Activated CD4-positive, alpha-beta memory T cell treated with anti-CD3 and anti-CD28 coated beads for 36 hours (primary cell): ENCODE measurements at regions of chr2 and their contacts with region 1.

Region 1: GRCh38 chr2:27303093-27304025 is 4.9 kb downstream of the UCN start:
- DNase-seq: peak; percentile 48
- H3K4me3 Mint-ChIP-seq: peak overlapping the region; percentile 55
- H3K27ac Mint-ChIP-seq: no peak overlapping the region
- H3K4me1 Mint-ChIP-seq: peaks cover 8% of the 10 kb centered on the region
- H3K27me3 Mint-ChIP-seq: peaks cover 27% of the 10 kb centered on the region

Region 2: GRCh38 chr2:26846328-26847306 is 456.7 kb before region 1 on chr2:
- CTCF ChIA-PET with region 1: interaction called, 15 read pairs
- POLR2A ChIA-PET with region 1: no interaction called
- intact Hi-C with region 1: no loop called
- DNase-seq: peak; percentile 71
- H3K4me3 Mint-ChIP-seq: no peak overlapping the region
- H3K27ac Mint-ChIP-seq: no peak overlapping the region
- H3K4me1 Mint-ChIP-seq: peaks cover 11% of the 10 kb centered on the region
- H3K27me3 Mint-ChIP-seq: peaks cover 43% of the 10 kb centered on the region

Region 3: DNA sequence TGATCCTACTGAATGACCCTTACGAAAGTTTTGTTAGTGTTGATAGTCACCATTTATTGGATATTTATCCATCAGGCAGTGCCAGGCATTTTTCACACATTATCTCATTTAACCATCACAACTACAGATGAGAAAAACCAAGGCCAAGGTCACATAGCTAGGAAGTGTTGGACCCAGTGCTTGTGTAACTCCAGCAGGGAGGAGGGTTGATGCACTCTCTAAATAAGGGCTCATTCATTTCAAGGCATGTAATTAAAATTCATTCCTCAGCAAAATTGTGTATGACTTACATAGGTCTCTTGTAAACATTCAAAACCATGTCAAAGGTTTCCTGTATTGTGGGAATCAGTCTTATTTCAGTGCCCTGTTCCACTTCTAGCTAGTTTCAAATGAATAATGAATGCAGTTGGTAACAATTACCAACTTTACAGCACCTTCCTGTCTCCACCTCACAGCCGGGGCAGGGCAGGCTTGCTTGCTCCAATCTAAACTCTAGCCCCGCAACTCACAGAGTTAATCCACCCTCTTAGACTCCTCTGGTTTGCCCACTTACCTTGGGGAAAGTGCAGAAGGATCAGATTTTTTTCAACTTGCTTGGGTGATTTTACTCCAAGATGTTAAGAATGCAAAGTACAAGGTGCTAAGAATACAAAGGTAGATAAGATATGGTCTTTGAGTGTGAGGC is 338.8 kb before region 1 on chr2:
- CTCF ChIA-PET with region 1: interaction called, 46 read pairs
- POLR2A ChIA-PET with region 1: no interaction called
- intact Hi-C with region 1: loop called (anchors 1 kb)
- DNase-seq: no peak
- H3K4me3 Mint-ChIP-seq: no peak overlapping the region
- H3K27ac Mint-ChIP-seq: no peak overlapping the region
- H3K4me1 Mint-ChIP-seq: peaks cover 7% of the 10 kb centered on the region
- H3K27me3 Mint-ChIP-seq: peaks cover 22% of the 10 kb centered on the region

Region 4: GRCh38 chr2:27050281-27050995 is 252.9 kb before region 1 on chr2:
- CTCF ChIA-PET with region 1: no interaction called
- POLR2A ChIA-PET with region 1: no interaction called
- intact Hi-C with region 1: no loop called
- DNase-seq: peak; percentile 97
- H3K4me3 Mint-ChIP-seq: peak overlapping the region; percentile 98
- H3K27ac Mint-ChIP-seq: peak overlapping the region; percentile 100
- H3K4me1 Mint-ChIP-seq: peaks cover 18% of the 10 kb centered on the region
- H3K27me3 Mint-ChIP-seq: peaks cover 8% of the 10 kb centered on the region

Region 5: GRCh38 chr2:27133905-27134780 is 169.2 kb before region 1 on chr2 and contains the start of gene PREB:
- CTCF ChIA-PET with region 1: interaction called, 15 read pairs
- POLR2A ChIA-PET with region 1: no interaction called
- intact Hi-C with region 1: no loop called
- DNase-seq: peak; percentile 98
- H3K4me3 Mint-ChIP-seq: peak within 1 kb of the TSS; percentile 89
- H3K27ac Mint-ChIP-seq: peak within 1 kb of the TSS; percentile 86
- H3K4me1 Mint-ChIP-seq: peaks cover 20% of the 10 kb centered on the region
- H3K27me3 Mint-ChIP-seq: no peaks in the 10 kb centered on the region
- total RNA-seq, gene PREB: 64.7 to 65.4 TPM

Region 6: GRCh38 chr2:27249891-27250651 is 53.3 kb before region 1 on chr2:
- CTCF ChIA-PET with region 1: interaction called, 10 read pairs
- POLR2A ChIA-PET with region 1: no interaction called
- intact Hi-C with region 1: loop called (anchors 1 kb)
- DNase-seq: peak; percentile 77
- H3K4me3 Mint-ChIP-seq: no peak overlapping the region
- H3K27ac Mint-ChIP-seq: no peak overlapping the region
- H3K4me1 Mint-ChIP-seq: no peaks in the 10 kb centered on the region
- H3K27me3 Mint-ChIP-seq: peaks cover 6% of the 10 kb centered on the region

Region 7: DNA sequence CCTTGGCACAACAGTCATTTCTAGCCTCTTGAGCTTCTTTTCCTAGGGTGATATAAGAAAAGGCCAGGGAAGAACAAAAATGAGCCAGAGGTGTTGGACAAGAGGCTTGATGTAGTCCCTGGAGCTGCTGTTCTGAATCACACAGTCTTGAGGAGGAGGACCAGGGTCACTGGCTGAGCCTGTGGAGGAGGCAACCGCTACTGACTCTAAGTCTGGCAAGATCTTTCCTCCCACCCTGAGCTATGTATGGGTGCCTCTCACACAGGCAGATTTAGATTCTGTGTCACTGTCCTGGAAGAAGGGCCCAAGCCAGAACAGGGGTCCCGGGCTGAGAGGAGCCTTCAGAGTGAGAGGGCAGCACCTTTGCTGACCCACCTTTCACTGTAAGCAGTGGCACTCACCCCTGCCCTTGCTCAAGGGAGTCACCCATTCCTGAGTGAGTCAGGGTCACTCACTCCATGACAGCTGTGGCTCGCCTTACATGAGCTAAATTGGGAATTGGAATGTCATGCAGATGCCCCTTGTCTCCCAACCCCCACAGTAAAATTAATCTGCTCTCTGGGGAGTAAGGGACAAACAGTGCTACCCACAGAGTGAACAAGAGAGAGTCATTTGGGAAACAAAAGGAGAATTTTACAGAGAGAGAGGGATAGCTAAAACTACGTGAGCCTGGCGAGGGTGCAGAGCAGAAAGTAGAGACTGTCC is 21.4 kb before region 1 on chr2 and contains the start of gene TRIM54:
- CTCF ChIA-PET with region 1: interaction called, 94 read pairs
- POLR2A ChIA-PET with region 1: interaction called, 5 read pairs
- intact Hi-C with region 1: no loop called
- DNase-seq: no peak
- H3K4me3 Mint-ChIP-seq: no peak within 1 kb of the TSS
- H3K27ac Mint-ChIP-seq: no peak within 1 kb of the TSS
- H3K4me1 Mint-ChIP-seq: peaks cover 2% of the 10 kb centered on the region
- H3K27me3 Mint-ChIP-seq: peaks cover 20% of the 10 kb centered on the region
- total RNA-seq, gene TRIM54: not detected

Region 8: GRCh38 chr2:27322766-27323595 is 19.6 kb after region 1 on chr2 and contains the start of gene MPV17:
- CTCF ChIA-PET with region 1: interaction called, 32 read pairs
- POLR2A ChIA-PET with region 1: interaction called, 10 read pairs
- intact Hi-C with region 1: no loop called
- DNase-seq: peak; percentile 94
- H3K4me3 Mint-ChIP-seq: peak within 1 kb of the TSS; percentile 93
- H3K27ac Mint-ChIP-seq: peak within 1 kb of the TSS; percentile 88
- H3K4me1 Mint-ChIP-seq: peaks cover 18% of the 10 kb centered on the region
- H3K27me3 Mint-ChIP-seq: no peaks in the 10 kb centered on the region
- total RNA-seq, gene MPV17: 85.5 to 86.0 TPM

Region 9: DNA sequence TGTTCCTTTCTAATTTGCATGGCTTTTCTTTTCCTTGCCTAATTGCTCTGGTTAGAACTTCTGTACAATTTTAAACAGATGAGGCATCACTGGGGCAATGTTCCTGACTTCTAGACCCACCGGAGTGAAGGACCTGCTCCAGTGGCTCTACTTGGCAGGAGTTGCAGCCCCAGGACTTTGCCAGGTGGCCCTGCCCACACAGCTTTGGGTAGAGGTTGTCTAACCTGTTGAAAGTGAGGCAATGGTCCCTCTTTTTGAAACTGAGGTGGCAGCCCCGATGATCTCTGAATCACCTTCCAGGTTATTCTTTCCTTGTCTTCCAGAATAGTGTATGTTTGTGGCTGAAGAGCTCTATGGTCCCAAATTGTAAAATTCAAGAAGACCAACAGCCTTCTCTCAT is 249.6 kb after region 1 on chr2:
- CTCF ChIA-PET with region 1: no interaction called
- POLR2A ChIA-PET with region 1: no interaction called
- intact Hi-C with region 1: no loop called
- DNase-seq: no peak
- H3K4me3 Mint-ChIP-seq: no peak overlapping the region
- H3K27ac Mint-ChIP-seq: no peak overlapping the region
- H3K4me1 Mint-ChIP-seq: no peaks in the 10 kb centered on the region
- H3K27me3 Mint-ChIP-seq: peaks cover 3% of the 10 kb centered on the region